BJ (cell line): ENCODE measurements at regions of chr6 and their contacts with region 1.

Region 1: DNA sequence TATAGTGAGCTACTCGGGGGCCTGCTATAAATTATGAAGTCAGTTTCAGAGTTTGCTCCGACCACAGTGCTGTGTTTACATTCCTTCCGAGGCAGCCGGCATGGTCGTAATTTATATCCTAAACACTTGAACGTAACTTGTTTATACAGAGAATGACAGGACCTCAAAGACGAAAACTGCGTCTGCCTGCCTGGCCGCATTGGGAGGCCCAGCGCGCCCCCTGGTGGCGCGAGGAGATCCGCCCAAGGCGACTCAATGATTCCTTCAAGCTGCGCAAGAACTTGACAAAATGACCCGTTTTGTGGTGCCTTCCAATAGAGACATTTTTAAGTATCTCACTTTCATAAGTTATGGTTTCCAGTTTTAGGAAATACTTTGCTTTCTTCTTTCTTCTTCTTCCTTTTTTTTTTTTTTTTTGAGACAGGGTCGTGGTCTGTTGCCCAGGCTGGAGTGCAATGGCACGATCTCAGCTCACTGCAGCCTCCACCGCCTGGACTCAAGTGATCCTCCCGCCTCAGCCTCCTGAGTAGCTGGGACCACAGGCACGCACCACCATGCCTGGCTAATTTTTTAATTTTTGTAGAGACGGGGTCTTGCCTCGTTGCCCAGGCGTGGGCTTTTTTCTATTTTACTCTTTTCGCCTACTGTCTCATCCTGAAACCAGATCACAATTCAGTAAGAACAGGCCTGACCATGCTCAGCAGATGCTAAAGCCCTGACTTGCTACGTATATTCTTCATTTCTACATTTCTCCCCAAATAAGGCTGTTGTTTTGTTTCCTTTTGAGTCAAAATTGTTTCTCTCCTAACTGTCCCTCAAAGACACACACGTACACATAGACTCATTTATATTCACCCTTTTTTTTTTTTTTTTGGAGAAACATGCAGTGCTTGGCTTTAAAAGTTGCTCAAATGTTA is 7.8 kb downstream of the FOXF2 start:
- DNase-seq: peak; percentile 82
- H3K4me3 ChIP-seq: no peak overlapping the region
- H3K27me3 ChIP-seq: no peaks in the 10 kb centered on the region
- CTCF ChIP-seq: peak; percentile 99

Region 2: DNA sequence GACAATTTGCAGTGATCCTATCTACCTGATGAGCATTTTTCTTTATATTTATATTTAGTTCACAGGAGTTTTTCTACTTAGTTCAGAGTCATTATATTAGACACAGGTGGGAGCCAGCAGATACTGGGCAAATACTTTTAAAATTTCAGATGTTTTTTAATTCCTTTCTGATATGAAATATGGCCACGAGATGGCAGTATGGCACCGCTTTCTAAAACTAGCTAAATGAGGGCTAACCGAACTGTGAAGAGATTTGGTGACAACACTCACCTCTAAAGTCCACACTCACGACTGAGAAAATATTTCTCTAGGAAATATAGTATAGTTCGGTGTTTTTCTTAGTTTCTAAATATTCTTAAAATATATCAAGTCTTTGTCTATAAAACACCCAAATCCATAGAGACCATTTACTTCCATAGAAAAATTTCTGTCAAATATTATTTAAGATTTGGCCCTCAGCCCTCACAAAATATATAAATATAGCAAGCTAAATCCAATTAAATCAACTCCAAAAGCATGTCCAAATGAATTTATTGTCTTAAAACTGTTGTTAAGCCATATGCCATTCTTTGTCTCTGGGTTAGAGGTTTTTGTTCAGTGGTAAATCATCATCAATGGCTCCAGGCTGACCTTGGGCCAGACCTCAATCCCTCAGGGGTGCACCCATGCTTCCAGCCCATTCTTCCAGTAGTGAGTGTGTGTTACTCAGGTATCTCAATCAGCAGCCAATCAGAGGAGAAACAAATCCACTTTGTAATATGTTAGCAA is 803.9 kb before region 1 on chr6:
- CTCF ChIA-PET with region 1: interaction called, 12 read pairs
- POLR2A ChIA-PET with region 1: no interaction called
- DNase-seq: no peak
- H3K4me3 ChIP-seq: no peak overlapping the region
- H3K27me3 ChIP-seq: no peaks in the 10 kb centered on the region
- CTCF ChIP-seq: peak; percentile 55

Region 3: DNA sequence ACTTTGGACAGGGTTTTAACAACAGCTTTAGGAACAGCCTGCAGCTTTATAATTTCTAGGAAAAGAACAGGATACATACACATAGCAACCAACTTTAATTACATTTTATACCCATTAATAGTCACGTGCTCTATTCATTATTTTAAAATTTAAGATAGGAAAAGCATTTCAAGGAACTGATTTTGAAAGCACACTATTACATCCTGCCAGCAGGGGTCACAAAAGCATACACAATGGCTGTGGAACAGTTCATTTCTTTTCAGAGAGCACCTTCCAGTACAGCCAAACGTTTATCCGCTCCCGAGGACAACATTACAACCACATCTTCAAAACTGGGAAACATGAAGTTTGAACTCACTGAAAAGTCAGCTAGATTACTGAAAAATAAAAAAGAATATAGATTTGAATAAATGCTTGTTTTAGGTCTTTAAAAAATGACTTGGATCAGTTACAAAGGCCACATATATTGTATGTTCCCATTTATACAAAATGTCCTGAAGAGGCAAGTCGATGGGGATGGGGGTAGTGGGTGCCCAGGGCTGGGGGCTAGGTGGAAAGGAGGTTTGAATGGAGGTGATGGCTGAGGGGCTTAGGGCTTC is 599.6 kb before region 1 on chr6:
- CTCF ChIA-PET with region 1: interaction called, 13 read pairs
- POLR2A ChIA-PET with region 1: no interaction called
- DNase-seq: no peak
- H3K4me3 ChIP-seq: no peak overlapping the region
- H3K27me3 ChIP-seq: peaks cover 14% of the 10 kb centered on the region
- CTCF ChIP-seq: peak; percentile 69

Region 4: DNA sequence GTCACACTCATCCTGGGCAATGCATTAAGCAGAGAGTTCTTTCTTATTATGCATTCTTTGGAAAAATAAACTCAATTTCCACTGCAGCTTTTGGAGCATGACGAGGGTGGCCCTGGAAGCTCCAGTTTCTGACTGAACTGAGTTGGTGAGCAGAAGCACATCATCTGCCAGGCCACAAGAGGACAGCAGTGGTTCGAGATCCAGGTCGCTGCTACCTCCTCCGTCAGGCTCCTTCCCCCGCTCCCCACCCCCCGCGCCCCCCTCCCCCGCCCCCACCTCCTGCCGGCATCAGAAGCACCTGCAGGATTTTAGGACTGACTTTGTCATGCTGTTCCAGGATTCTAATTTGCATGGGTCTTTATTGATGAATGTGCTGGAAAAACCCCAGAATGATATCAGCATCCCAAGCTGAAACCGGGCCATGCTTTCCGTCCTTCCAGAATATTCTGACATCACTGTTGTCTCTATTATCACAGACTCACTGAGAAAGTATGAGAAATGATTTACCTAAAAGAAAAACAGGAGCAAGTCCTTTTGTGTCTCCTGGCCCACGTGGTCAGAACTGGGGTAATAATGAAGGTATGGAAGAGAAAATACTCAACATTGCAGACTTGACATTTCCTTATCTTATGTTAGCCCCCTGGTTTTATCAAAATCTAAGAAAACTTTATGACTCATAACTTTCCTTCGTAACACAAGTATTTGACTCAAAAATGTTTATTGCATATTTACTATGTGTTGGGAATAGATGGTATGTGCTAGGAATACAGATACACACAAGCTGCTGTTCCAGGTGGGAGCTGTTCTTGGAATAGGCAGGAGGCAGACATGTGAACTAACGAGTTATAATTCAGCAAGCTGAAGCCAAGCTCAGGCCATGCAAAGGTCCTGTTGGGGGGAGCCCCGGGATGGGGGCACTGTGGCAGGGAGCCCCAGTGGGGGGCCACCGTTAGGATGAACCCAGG is 484.1 kb before region 1 on chr6:
- CTCF ChIA-PET with region 1: interaction called, 15 read pairs
- POLR2A ChIA-PET with region 1: no interaction called
- DNase-seq: no peak
- H3K4me3 ChIP-seq: no peak overlapping the region
- H3K27me3 ChIP-seq: peaks cover 8% of the 10 kb centered on the region
- CTCF ChIP-seq: peak; percentile 78

Region 5: GRCh38 chr6:1227935-1228753 is 169.1 kb before region 1 on chr6:
- CTCF ChIA-PET with region 1: no interaction called
- POLR2A ChIA-PET with region 1: no interaction called
- DNase-seq: no peak
- H3K4me3 ChIP-seq: no peak overlapping the region
- H3K27me3 ChIP-seq: peaks cover 5% of the 10 kb centered on the region
- CTCF ChIP-seq: no peak

Region 6: GRCh38 chr6:1412901-1413300 is 15.7 kb after region 1 on chr6:
- CTCF ChIA-PET with region 1: interaction called, 13 read pairs
- POLR2A ChIA-PET with region 1: no interaction called
- DNase-seq: no peak
- H3K4me3 ChIP-seq: no peak overlapping the region
- H3K27me3 ChIP-seq: no peaks in the 10 kb centered on the region
- CTCF ChIP-seq: no peak

Region 7: DNA sequence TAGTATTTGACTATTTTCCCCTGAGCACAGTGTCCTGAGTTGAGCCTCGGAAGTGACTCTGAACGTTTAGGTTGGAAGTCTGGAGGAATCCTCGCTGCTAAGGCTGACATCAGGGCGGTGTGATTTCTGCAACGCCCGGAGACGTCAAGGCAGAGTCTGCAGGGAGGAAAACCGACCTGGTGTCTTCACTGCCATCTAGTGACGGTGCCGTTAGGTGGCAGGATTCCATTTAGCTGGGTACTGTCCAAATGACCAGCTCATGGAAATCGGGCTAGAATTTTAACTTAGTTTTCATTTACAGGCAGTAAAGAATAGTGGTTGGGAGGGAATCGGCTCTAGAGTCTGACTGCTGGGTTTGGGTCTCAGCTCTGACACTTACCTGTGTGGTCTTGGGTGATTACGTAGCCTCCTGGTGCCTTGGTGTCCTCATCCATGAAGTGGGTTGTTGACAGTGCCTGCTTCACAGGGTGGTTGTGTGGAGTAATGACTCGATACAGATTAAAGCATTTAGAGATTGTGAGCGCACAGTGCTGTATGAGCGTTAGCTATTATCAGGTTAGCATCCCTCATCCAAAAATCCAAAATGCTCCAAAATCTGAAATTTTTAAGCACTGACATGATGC is 27.2 kb after region 1 on chr6:
- CTCF ChIA-PET with region 1: interaction called, 20 read pairs
- POLR2A ChIA-PET with region 1: no interaction called
- DNase-seq: no peak
- H3K4me3 ChIP-seq: no peak overlapping the region
- H3K27me3 ChIP-seq: peaks cover 2% of the 10 kb centered on the region; the same call in 1 of the 2 replicates
- CTCF ChIP-seq: peak; percentile 81

Region 8: DNA sequence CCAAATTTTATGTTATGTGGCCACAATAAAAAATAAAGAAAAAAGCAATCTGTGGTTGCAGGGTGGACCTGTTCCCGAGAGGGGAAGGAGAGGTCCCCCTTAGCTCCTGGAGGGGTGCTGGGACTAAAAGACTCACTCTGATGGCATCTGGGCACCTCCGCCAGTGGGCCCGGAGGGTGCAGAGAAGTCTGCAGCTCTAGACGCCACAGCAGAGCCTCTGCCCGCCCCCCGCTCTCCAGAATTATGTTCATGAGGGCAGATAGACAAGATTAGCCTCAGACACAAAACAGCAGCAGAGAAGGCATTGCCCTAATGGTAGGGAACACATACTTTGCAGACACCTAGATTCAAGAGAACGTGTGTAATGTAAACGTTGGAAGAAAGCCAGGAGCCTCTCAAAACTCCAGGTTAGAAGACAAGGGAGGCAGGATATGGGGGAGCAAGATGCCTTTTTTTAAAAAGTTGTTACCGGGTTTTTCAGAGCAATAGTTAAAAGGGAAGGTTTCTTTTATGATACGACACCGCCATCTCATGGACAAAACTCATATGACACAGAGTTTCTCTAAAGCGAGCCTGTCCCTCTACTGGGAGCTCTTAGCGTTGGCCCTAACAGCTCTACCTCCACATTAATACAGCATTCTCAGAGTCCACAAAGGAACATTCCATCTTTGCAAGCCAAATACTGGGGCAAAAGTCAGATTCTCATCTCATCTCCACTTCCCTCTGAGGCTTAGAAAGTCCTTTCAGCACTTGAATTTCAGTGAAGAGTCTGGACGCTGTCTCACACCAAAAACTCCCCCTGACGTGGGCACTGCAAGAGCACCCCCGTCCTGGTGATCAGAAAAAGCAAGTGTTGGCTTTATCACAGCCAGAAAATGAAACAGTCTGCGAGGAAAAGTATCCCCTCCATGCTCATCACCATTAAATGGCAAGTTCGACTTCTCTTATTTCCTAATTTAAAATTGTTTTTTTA is 39.4 kb after region 1 on chr6:
- CTCF ChIA-PET with region 1: interaction called, 10 read pairs
- POLR2A ChIA-PET with region 1: no interaction called
- DNase-seq: peak; percentile 23
- H3K4me3 ChIP-seq: no peak overlapping the region
- H3K27me3 ChIP-seq: no peaks in the 10 kb centered on the region
- CTCF ChIP-seq: peak; percentile 73